ENCODE measurements at regions of chr19 and their contacts with region 1.

Region 1: GRCh38 chr19:3665681-3666544 is 34.4 kb downstream of the PIP5K1C start:
- DNase-seq: peak; percentile 46
- H3K4me3 ChIP-seq: no peak overlapping the region
- H3K27ac ChIP-seq: no peak overlapping the region
- H3K4me1 ChIP-seq: peaks cover 10% of the 10 kb centered on the region
- H3K27me3 ChIP-seq: no peaks in the 10 kb centered on the region
- CTCF ChIP-seq: peak; percentile 66 to 90
- POLR2A ChIP-seq: no peak

Region 2: DNA sequence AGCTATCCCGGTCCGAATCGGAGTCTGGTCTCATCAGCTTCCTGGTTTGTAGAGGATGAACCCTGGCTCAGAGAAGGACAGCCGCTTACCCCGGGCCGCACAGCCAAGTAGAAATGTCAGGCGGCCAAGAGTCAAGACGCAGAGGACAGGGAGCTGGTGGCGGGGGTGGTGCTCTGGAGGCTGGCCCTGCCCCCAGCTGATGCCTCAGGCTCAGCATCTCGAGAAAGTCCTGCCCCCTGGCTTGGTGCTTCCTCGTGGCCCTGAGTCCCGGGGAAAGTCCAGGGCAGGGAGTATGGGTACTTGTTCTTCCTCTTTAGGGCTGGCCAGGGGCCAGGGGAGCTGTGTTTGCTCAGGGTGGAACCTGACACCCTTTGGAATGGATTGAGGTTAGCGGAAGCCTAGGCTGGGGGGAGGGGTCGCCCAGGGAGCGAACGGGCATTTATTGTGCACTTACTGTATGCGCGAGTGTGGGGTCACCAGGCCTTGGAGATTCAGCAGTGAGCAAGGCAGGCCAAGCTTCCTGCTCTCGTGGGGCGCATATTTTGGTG is 44.4 kb after region 1 on chr19:
- CTCF ChIA-PET with region 1: interaction called, 16 read pairs
- POLR2A ChIA-PET with region 1: no interaction called
- dilution Hi-C with region 1: no loop called
- intact Hi-C with region 1: no loop called
- DNase-seq: no peak
- H3K4me3 ChIP-seq: no peak overlapping the region
- H3K27ac ChIP-seq: no peak overlapping the region
- H3K4me1 ChIP-seq: no peaks in the 10 kb centered on the region
- H3K27me3 ChIP-seq: peaks cover 0 to 1% of the 10 kb centered on the region in 2 experiments
- CTCF ChIP-seq: no peak
- POLR2A ChIP-seq: no peak